Endothelial cell of umbilical vein (primary cell): ENCODE measurements at regions of chr1 and their contacts with region 1.

Region 1: DNA sequence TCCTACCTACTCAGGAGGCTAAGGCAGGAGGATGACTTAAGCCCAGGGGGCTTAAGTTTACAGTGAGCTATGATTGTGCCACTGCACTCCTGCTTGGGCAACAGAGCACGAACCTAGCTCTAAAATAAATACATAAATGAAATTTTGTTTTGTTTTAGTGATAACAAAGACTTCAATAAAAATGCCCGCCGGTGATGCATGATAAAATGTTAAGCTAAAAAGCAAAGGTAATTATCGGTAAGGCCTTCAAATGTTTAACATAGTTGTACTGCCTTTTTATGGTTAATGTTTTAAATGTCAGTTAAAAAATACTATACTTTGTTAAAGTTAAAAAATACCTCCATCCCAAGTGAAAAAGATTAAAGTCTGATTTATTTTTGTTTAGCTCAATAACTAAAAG is 27.0 kb downstream of the KDM5B start:
- DNase-seq: no peak
- H3K4me3 ChIP-seq: no peak overlapping the region
- H3K27ac ChIP-seq: no peak overlapping the region
- H3K4me1 ChIP-seq: no peaks in the 10 kb centered on the region
- H3K27me3 ChIP-seq: no peaks in the 10 kb centered on the region
- CTCF ChIP-seq: no peak
- POLR2A ChIP-seq: no peak

Region 2: GRCh38 chr1:202791077-202791747 is 10.0 kb after region 1 on chr1:
- CTCF ChIA-PET with region 1: interaction called, 12 read pairs
- POLR2A ChIA-PET with region 1: no interaction called
- dilution Hi-C with region 1: no loop called
- intact Hi-C with region 1: no loop called
- DNase-seq: peak; percentile 47
- H3K4me3 ChIP-seq: no peak overlapping the region
- H3K27ac ChIP-seq: no peak overlapping the region
- H3K4me1 ChIP-seq: peaks cover 7% of the 10 kb centered on the region
- H3K27me3 ChIP-seq: no peaks in the 10 kb centered on the region
- CTCF ChIP-seq: no peak
- POLR2A ChIP-seq: no peak